Activated CD4-positive, alpha-beta T cell treated with anti-CD3 and anti-CD28 coated beads for 36 hours (primary cell): ENCODE measurements at regions of chr16 and their contacts with region 1.

Region 1: DNA sequence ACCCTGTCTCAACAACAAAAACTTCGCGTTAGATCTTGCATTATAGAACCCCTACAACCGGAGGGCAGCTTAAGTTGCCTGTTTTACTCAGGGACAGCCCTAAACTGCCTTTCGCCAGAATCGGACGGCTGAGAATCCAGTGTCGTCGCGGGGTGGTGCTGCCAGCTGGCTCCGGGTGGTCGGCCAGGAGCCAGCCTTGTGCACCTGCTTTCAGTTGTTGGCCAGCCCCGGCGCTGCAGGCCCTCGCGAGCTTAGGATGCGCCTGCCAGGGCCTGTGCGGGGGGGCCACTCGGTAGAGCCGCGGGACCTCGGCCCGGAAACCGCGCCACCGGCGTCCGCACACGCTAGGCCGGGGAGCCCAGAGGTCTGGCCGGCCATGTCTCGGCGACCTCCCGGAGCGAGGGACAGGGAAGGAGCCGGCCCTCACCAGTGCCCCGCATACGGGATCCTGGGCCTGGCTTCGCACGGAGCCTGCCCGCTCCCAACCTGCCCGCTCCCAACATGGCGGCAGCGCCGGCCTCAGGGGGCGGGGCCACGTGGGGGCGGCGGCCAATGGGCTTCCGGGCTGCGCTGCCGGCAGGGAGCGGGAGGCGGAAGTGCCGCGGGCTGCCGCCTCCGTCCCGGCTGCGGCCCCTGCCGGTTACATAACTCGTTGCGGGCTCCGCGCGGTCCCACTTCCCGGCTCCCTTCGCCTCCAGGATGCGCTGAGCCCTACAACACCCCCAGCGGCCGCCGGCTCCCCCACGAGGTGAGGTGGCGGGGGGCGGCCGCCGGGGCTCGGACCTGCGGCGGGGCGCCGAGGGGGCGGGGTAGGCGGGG is 14.2 kb downstream of the NAA60 start:
- DNase-seq: peak; percentile 93
- ATAC-seq: peak; percentile 86
- H3K4me3 Mint-ChIP-seq: peak overlapping the region; percentile 74
- H3K27ac Mint-ChIP-seq: peak overlapping the region; percentile 83
- H3K4me1 Mint-ChIP-seq: peaks cover 41% of the 10 kb centered on the region
- H3K27me3 Mint-ChIP-seq: no peaks in the 10 kb centered on the region

Region 2: GRCh38 chr16:3188925-3189825 is 268.5 kb before region 1 on chr16:
- CTCF ChIA-PET with region 1: no interaction called
- POLR2A ChIA-PET with region 1: no interaction called
- intact Hi-C with region 1: loop called in 1 of 2 experiments (anchors 5 kb)
- DNase-seq: peak; percentile 78
- ATAC-seq: peak; percentile 42
- H3K4me3 Mint-ChIP-seq: peak overlapping the region; percentile 69
- H3K27ac Mint-ChIP-seq: peak overlapping the region; percentile 72
- H3K4me1 Mint-ChIP-seq: peaks cover 46% of the 10 kb centered on the region
- H3K27me3 Mint-ChIP-seq: peaks cover 66% of the 10 kb centered on the region

Region 3: DNA sequence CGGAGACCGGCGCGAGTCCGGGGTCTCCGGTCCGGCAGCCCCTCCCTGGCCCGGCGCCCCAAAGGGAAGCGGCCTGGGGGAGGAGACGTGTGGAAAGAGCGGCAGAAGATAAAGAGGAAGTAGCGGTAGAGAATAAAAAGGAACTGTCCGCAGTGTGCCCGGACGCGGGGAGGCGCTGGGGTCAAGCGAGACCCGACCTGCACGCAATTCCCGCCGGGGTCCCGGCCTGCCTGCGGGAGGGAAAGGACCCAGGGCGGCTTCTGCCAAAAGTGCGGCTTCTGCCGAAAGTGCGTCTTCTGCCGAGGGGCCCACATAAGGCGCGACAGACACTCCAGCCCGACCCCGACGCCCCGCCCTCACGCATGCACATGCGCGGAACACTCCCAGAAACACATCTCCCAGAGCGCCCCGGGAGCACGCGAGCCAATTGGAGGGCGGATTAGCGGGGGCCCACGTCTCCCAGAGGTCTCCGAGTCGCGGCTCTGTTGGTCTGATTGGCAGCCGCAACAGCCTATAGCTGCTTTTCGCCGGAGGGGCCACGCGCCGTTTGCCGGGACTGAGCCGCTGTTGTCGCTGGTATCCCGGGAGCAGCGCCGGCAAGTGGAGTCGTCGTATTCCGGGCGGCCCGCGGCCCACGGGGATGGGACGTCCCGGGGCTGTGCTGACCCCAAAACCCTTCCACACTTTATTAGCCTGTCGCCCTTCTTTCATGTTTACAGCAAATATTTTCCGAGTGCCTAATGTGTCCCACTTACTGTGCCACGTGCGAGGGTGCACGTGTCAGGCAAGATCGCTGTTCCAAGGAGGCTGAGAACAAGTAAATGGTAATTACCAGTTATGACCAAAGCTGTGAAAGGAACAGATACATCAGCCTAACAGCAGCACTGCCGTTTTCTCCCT is 193.3 kb before region 1 on chr16:
- CTCF ChIA-PET with region 1: no interaction called
- POLR2A ChIA-PET with region 1: no interaction called
- intact Hi-C with region 1: loop called in 1 of 2 experiments (anchors 1 kb)
- DNase-seq: peak; percentile 99
- ATAC-seq: peak; percentile 95
- H3K4me3 Mint-ChIP-seq: peak overlapping the region; percentile 83
- H3K27ac Mint-ChIP-seq: peak overlapping the region; percentile 90
- H3K4me1 Mint-ChIP-seq: peaks cover 25% of the 10 kb centered on the region
- H3K27me3 Mint-ChIP-seq: no peaks in the 10 kb centered on the region

Region 4: DNA sequence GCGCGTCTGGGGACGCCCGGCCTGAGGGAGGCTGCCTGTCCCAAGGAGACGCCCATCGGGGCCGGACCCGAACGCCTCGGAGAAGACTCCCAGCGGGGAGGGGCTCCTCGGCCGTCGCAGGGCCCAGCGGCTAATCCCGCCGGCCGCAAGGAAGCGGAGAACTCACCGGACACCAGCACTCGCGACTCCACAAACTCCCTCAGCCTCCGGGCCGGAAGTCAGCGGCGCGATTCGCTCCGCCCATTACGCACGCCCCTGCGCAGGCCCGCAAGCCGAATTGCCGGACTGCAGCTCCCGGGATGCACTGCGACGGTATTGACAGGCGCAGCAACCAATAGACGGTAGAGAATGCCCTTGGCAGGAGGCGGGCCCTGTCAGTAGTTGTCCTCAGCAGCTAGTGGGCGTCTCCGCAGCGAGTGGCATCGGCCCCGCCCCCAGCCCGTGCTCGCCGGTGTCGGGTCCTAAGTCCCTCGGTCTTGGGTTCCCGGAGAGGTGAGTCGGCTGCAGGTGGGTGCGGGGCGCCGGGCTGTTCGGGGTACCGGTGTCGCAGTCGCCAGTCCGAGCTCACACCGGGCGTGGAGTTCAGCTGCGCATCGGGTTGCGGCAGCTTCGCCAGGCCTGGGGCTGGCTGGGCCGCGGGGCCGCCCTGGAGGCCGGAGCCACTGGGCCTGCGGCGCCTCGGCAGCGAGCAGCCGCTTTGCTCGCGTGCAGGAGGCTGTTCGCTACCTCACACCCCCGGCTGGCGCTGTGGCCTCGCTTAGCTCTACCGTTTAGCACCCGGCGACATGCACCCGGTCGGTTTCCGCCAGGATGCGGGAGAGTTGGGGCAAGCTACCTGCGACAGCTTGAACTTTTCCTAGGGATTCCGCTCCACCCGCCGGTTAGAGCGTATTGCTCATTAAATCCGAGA is 56.6 kb before region 1 on chr16 and contains the starts of genes ZNF174 and ZSCAN32:
- CTCF ChIA-PET with region 1: interaction called, 3 read pairs
- POLR2A ChIA-PET with region 1: no interaction called
- intact Hi-C with region 1: loop called (anchors 1 to 5 kb)
- DNase-seq: peak; percentile 99
- ATAC-seq: peak; percentile 99
- H3K4me3 Mint-ChIP-seq: peak within 1 kb of the TSS; percentile 91
- H3K27ac Mint-ChIP-seq: peak within 1 kb of the TSS; percentile 83
- H3K4me1 Mint-ChIP-seq: peaks cover 49% of the 10 kb centered on the region
- H3K27me3 Mint-ChIP-seq: no peaks in the 10 kb centered on the region
- total RNA-seq, gene ZNF174: 7.4 to 9.5 TPM
- total RNA-seq, gene ZSCAN32: 15.7 to 17.4 TPM

Region 5: GRCh38 chr16:3487521-3488378 is 30.1 kb after region 1 on chr16:
- CTCF ChIA-PET with region 1: no interaction called
- POLR2A ChIA-PET with region 1: no interaction called
- intact Hi-C with region 1: no loop called
- DNase-seq: no peak
- ATAC-seq: no peak
- H3K4me3 Mint-ChIP-seq: no peak overlapping the region
- H3K27ac Mint-ChIP-seq: no peak overlapping the region
- H3K4me1 Mint-ChIP-seq: no peaks in the 10 kb centered on the region
- H3K27me3 Mint-ChIP-seq: no peaks in the 10 kb centered on the region

Region 6: GRCh38 chr16:3578610-3579551 is 121.2 kb after region 1 on chr16:
- CTCF ChIA-PET with region 1: no interaction called
- POLR2A ChIA-PET with region 1: interaction called, 3 read pairs
- intact Hi-C with region 1: loop called in 1 of 2 experiments (anchors 5 kb)
- DNase-seq: peak; percentile 82
- ATAC-seq: peak; percentile 68
- H3K4me3 Mint-ChIP-seq: peak overlapping the region; percentile 95
- H3K27ac Mint-ChIP-seq: peak overlapping the region; percentile 97
- H3K4me1 Mint-ChIP-seq: peaks cover 45% of the 10 kb centered on the region
- H3K27me3 Mint-ChIP-seq: no peaks in the 10 kb centered on the region

Region 7: DNA sequence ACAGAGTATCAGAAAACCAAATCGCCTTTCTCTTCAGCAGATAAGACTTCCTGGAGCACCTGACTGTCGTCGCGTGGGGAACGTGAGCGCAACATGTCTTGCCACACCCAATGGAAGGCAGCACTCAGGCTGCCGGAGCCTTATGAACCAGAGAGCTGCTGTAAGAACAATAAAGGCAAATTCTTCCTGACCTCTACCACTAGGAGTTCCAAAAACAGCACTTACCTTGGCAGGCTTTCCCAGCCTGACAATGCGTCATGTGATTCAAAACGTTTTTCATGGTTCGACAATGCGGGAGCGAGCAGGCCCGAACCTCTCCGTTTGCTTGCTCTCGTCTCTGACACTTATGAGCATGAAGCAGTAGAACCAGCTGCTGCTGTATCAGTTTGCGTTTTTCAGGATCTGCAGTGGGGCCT is 335.5 kb after region 1 on chr16:
- CTCF ChIA-PET with region 1: no interaction called
- POLR2A ChIA-PET with region 1: no interaction called
- intact Hi-C with region 1: no loop called
- DNase-seq: no peak
- ATAC-seq: no peak
- H3K4me3 Mint-ChIP-seq: no peak overlapping the region
- H3K27ac Mint-ChIP-seq: no peak overlapping the region
- H3K4me1 Mint-ChIP-seq: peaks cover 61% of the 10 kb centered on the region
- H3K27me3 Mint-ChIP-seq: peaks cover 9% of the 10 kb centered on the region